ENCODE measurements at regions of chr11 and their contacts with region 1.

Region 1: DNA sequence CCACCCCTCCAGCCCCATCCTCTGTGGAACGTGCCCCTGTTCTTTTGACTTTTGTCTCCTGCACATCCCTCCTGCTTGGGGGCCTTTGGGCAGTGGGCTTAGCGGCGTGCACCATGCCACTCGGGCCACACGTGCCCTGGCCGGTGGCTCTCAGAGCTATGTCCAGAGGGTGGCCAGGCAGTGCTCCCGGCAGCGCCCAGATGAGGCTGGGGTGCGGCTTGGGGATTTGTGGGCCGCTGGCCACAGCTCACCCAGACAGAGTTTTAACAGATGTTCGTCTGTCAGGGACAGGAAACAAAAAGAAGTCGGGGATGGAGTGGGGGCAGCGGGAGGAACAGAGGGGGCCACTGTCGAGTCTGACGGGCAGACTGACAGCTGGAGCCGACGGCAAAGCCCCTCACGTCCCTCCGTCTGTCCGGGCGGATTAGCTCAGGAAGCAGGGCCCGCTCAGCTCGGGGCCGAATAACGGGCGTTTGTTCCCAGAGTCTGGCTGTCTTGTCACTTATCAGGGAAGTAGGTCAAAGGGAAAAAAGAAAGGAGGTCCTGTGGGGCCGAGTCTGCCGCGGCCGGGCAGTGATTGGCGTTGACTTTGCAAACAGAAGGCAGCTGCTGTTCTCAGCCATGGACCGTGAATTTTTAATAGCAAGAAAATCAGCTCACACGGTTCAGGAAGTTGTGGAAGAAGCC is 61.6 kb downstream of the LRP5 start:
- DNase-seq: peak; percentile 63
- ATAC-seq: peak; percentile 34 to 65

Region 2: GRCh38 chr11:68312117-68312779 is 61.7 kb before region 1 on chr11 and contains the start of gene LRP5:
- intact Hi-C with region 1: loop called in 1 of 2 experiments (anchors 2 kb)
- DNase-seq: no peak
- ATAC-seq: peak; percentile 7 to 10
- total RNA-seq, gene LRP5: 53.4 to 60.3 TPM

Measured in left cardiac atrium (tissue), 4 donors.